Sciatic nerve (tissue), 2 donors: ENCODE measurements at regions of chr3 and their contacts with region 1.

Region 1: GRCh38 chr3:153734777-153735551 is 386.2 kb upstream of the ARHGEF26 start:
- DNase-seq: no peak
- ATAC-seq: no peak

Region 2: GRCh38 chr3:153835540-153835939 is 100.6 kb after region 1 on chr3:
- intact Hi-C with region 1: loop called (anchors 1 kb)
- DNase-seq: no peak
- ATAC-seq: no peak